ENCODE measurements at regions of chr1 and their contacts with region 1.

Region 1: DNA sequence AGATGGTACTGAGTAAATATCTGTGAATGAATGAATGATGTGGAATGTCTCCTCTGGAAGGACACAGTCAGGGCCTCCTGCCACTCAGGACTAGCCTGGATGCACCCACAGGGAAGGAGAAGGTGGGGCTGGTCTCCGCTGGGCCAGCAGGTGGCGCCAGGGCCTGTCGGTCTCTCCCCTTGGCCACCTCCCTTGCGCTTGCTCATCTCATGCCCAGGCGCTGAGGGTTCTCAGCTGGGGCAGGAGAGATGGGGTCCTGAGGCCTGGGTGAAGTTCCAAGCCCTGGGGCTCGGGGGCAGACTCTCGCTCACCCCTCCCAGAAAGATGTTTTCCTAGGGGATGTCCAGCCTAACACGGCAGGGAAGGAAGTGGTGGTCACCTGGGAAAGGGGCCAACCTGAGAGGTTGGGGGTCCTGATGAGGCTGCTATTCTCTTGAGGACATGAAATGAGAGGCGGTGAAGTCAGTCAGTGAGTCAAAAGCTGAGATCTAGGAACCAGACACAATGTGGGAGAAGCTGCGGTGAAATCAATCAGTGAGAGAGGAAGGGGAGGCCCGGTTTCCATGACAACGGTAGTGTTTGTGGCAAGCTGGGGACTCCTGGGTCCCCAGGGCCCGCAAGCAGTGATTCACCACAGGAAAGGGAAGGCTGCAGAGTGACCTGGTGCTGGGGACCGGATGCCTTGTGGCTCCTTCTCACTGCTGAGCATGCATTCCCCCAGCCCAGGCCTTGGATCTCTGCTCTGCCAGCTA is 14.6 kb upstream of the MEX3A start:
- DNase-seq: peak; percentile 68 to 88
- H3K4me3 ChIP-seq: no peak overlapping the region
- H3K27ac ChIP-seq: peak overlapping the region; percentile 13; the same call in 1 of the 2 replicates
- H3K4me1 ChIP-seq: peaks cover 48% of the 10 kb centered on the region
- H3K27me3 ChIP-seq: no peaks in the 10 kb centered on the region
- CTCF ChIP-seq: peak; percentile 95

Region 2: DNA sequence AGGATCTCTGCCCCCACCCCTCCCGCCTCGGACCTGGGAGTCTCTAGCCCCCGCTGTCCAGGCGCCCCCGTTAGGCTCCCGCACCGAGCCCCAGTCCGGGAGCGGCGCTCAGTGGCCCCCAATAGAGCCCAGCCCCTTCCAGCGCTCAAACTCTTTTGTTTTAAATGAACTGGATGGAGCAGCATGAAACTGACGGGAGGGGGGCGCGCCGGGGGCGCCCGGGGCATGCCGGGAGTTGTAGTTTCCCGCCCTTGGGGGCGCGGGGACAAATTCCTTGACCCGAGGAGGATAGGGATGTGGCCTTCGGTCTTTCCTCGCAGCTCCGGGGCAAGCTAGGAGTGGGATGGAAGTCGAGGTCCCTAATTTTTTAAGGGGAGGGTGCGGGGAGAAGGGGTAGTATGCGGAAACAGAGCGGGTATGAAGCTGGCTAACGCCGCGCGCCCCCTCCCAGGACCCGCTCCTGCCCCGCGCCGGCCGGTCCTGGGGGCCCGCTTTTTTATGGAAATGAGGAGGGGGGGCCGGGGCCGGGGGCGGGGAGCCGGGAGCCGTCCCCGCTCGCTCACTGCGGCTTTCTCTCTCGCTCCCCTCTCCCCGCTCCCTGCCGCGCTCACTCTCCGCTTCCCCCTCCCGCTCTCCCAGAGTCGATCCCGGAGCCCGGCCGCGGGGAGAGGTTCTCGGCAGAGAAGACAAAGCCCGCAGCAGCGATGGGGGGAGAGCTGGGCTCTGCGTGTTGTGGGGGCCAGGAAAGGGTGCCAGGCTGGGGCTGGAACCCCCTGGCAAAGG is 14.3 kb before region 1 on chr1 and contains the start of gene MEX3A:
- CTCF ChIA-PET with region 1: interaction called, 11 read pairs
- POLR2A ChIA-PET with region 1: no interaction called
- intact Hi-C with region 1: no loop called
- DNase-seq: peak; percentile 44 to 79
- H3K4me3 ChIP-seq: peak within 1 kb of the TSS; percentile 100
- H3K27ac ChIP-seq: no peak within 1 kb of the TSS
- H3K4me1 ChIP-seq: peaks cover 21% of the 10 kb centered on the region
- H3K27me3 ChIP-seq: no peaks in the 10 kb centered on the region
- CTCF ChIP-seq: no peak
- total RNA-seq, gene MEX3A: 6.6 and 7.2 TPM in 2 replicates

Region 3: GRCh38 chr1:156114101-156114916 is 17.5 kb after region 1 on chr1 and contains the start of gene LMNA:
- CTCF ChIA-PET with region 1: interaction called, 8 read pairs
- POLR2A ChIA-PET with region 1: interaction called, 24 read pairs
- intact Hi-C with region 1: no loop called
- DNase-seq: peak; percentile 90 to 94
- H3K4me3 ChIP-seq: peak within 1 kb of the TSS; percentile 100
- H3K27ac ChIP-seq: peak within 1 kb of the TSS; percentile 69
- H3K4me1 ChIP-seq: peaks cover 65% of the 10 kb centered on the region
- H3K27me3 ChIP-seq: no peaks in the 10 kb centered on the region
- CTCF ChIP-seq: no peak
- total RNA-seq, gene LMNA: 569 and 580 TPM in 2 replicates

Region 4: GRCh38 chr1:156319664-156320063 is 222.8 kb after region 1 on chr1:
- CTCF ChIA-PET with region 1: interaction called, 3 read pairs
- POLR2A ChIA-PET with region 1: no interaction called
- intact Hi-C with region 1: loop called (anchors 10 kb)
- DNase-seq: no peak
- H3K4me3 ChIP-seq: no peak overlapping the region
- H3K27ac ChIP-seq: no peak overlapping the region
- H3K4me1 ChIP-seq: no peaks in the 10 kb centered on the region
- H3K27me3 ChIP-seq: no peaks in the 10 kb centered on the region
- CTCF ChIP-seq: peak; percentile 78